OCI-LY7 (cell line): ENCODE measurements at regions of chr12 and their contacts with region 1.

Region 1: GRCh38 chr12:21559855-21560569 is 33.9 kb downstream of the SPX start:
- DNase-seq: no peak
- H3K4me3 ChIP-seq: no peak overlapping the region
- H3K27ac ChIP-seq: no peak overlapping the region
- H3K4me1 ChIP-seq: no peaks in the 10 kb centered on the region
- CTCF ChIP-seq: no peak

Region 2: GRCh38 chr12:21576431-21576830 is 16.4 kb after region 1 on chr12:
- CTCF ChIA-PET with region 1: no interaction called
- POLR2A ChIA-PET with region 1: interaction called, 11 read pairs
- intact Hi-C with region 1: no loop called
- DNase-seq: no peak
- H3K4me3 ChIP-seq: no peak overlapping the region
- H3K27ac ChIP-seq: no peak overlapping the region
- H3K4me1 ChIP-seq: no peaks in the 10 kb centered on the region
- CTCF ChIP-seq: no peak